ENCODE measurements at regions of chr18 and their contacts with region 1.

Region 1: DNA sequence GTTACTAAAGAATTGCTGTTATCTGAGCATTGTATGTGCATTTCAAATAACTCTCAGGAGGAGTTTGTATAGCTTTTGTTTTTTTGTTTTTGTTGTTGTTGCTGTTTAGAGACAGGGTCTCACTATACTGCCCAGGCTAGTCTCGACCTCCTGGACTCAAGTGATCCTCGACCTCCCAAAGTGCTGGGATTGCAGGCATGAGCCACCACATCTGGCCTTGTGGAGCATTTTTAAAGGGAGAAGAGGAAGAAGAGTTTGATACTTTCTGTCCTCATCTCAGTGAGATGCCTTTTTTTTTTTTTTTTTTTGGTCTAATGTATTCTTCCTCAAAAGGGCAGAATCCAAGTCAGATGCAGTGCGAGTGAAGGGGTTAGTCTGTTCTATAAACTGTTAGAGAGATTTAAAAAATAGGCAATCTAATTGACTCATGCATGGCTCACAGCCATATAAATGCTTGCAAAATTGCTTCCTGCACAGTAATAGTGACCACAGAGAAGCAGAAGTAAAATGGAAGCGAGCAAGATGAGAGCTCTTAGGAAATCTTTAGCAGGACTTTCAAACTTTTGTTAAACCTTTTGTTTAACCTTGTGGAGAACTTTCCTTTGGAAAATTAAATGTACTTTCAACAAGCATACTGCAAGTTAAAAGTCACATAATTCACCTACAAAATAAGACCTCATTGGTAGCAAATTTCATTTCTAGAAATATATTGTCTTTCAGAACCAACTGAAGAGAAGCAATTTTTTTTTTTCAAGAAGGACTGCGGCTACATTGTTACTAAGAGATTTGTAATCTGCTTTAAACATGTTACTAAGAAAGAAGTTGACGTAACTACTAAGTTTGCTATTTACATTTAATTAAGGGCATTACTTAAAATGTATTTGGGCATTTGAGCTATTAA is 52.3 kb upstream of the ROCK1 start:
- DNase-seq: no peak
- ATAC-seq: no peak
- H3K4me3 ChIP-seq: no peak overlapping the region
- H3K27ac ChIP-seq: no peak overlapping the region
- H3K4me1 ChIP-seq: no peaks in the 10 kb centered on the region
- H3K27me3 ChIP-seq: no peaks in the 10 kb centered on the region
- CTCF ChIP-seq: no peak
- POLR2A ChIP-seq: no peak
- RAD21 ChIP-seq: no peak

Region 2: DNA sequence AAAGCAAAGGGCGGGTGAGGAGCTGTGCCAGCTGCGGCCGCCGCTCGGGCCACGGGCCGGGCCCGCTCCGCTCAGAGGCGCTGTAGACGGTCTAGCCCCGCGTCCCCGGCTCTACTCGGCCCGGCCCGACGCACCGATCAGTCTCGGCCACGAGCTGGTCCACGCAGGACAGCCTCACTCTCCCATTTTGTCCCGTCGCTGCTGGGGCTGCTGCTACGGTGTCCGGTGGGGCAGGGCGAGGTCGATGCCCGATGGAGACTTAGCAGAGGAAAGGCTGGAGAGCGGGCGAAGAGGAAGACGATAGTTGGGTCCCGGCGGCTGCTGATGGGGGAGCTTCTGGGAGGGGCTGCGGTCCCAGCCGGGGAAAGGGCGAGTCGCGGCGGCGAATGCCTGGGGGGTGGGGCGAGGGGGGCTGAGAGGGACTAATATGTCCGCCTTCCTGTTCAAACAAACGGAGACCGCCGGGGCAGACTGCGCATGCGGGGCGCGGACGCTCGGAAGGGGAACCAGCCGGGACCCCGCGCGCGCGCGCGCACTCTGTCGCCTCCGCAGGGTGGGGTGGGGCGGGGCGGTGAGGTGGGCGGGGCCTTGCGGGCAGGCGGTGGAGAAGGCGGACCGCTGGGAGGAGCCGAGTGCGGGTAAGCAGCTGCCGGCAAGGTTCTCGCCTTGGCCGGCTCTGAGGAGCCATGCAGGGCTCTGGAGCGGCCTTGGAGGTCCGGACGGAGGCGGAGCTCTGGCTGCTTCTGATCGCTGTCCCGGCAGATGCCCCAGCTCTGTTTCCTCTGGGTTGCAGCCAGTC is 52.4 kb before region 1 on chr18 and contains the start of gene ROCK1:
- CTCF ChIA-PET with region 1: no interaction called
- POLR2A ChIA-PET with region 1: no interaction called
- RAD21 ChIA-PET with region 1: no interaction called
- intact Hi-C with region 1: loop called (anchors 10 kb)
- DNase-seq: peak; percentile 89
- ATAC-seq: peak; percentile 96
- H3K4me3 ChIP-seq: peak within 1 kb of the TSS; percentile 89 to 92
- H3K27ac ChIP-seq: peak within 1 kb of the TSS; percentile 86
- H3K4me1 ChIP-seq: peaks cover 15 to 17% of the 10 kb centered on the region in 2 experiments; a peak in 3 of 4 replicates
- H3K27me3 ChIP-seq: no peaks in the 10 kb centered on the region
- CTCF ChIP-seq: no peak
- POLR2A ChIP-seq: peak; percentile 45
- RAD21 ChIP-seq: no peak
- total RNA-seq, gene ROCK1: 38.1 TPM

Region 3: GRCh38 chr18:21134898-21135297 is 29.0 kb before region 1 on chr18:
- CTCF ChIA-PET with region 1: no interaction called
- POLR2A ChIA-PET with region 1: no interaction called
- RAD21 ChIA-PET with region 1: no interaction called
- intact Hi-C with region 1: loop called (anchors 5 kb)
- DNase-seq: no peak
- ATAC-seq: no peak; the same call in 1 of the 2 replicates
- H3K4me3 ChIP-seq: no peak overlapping the region
- H3K27ac ChIP-seq: no peak overlapping the region
- H3K4me1 ChIP-seq: no peaks in the 10 kb centered on the region
- H3K27me3 ChIP-seq: no peaks in the 10 kb centered on the region
- CTCF ChIP-seq: peak; percentile 13 to 37 (median 15); a peak in 3 of 6 replicates
- POLR2A ChIP-seq: no peak
- RAD21 ChIP-seq: peak; percentile 55

Measured in HCT116 (cell line).